Psoas muscle (tissue), 8 donors: ENCODE measurements at regions of chr6 and their contacts with region 1.

Region 1: GRCh38 chr6:72622094-72622940 is 453 bp downstream of the KCNQ5 start:
- DNase-seq: peak; percentile 52 to 84
- ATAC-seq: peak; percentile 67 to 73 (median 72)
- H3K4me3 ChIP-seq: peak overlapping the region; percentile 86
- H3K27ac ChIP-seq: peak overlapping the region; percentile 88
- H3K4me1 ChIP-seq: peaks cover 21% of the 10 kb centered on the region
- H3K27me3 ChIP-seq: no peaks in the 10 kb centered on the region
- CTCF ChIP-seq: peak; percentile 41

Region 2: GRCh38 chr6:72748759-72749158 is 126.4 kb after region 1 on chr6:
- intact Hi-C with region 1: loop called in 1 of 2 experiments (anchors 10 kb)
- DNase-seq: no peak
- ATAC-seq: no peak
- H3K4me3 ChIP-seq: no peak overlapping the region
- H3K27ac ChIP-seq: peak overlapping the region; percentile 3
- H3K4me1 ChIP-seq: peaks cover 25% of the 10 kb centered on the region
- H3K27me3 ChIP-seq: no peaks in the 10 kb centered on the region
- CTCF ChIP-seq: no peak

Region 3: DNA sequence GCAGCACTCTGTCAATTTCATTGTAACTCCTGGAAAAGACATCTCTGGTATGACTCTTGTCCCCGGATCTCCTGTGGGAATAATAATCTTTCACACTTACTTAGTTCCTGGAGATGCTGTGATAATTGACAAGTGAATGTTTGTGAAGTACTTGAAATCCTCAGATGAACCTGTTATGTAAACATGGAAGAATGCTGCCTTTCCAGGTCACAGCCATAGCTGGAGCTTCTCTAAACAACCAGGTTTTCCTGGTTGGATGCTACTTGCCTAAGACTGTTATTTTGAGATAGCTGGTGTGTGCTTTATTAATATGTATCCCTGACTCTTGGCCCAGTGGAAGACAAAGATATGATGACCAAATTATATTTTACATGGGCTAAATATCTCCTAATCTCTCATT is 228.2 kb after region 1 on chr6:
- intact Hi-C with region 1: no loop called
- DNase-seq: no peak
- ATAC-seq: peak in 3 of 4 donors; percentile 37 to 57 (median 38)
- H3K4me3 ChIP-seq: no peak overlapping the region
- H3K27ac ChIP-seq: peak overlapping the region; percentile 44
- H3K4me1 ChIP-seq: peaks cover 11% of the 10 kb centered on the region
- H3K27me3 ChIP-seq: no peaks in the 10 kb centered on the region
- CTCF ChIP-seq: no peak

Region 4: DNA sequence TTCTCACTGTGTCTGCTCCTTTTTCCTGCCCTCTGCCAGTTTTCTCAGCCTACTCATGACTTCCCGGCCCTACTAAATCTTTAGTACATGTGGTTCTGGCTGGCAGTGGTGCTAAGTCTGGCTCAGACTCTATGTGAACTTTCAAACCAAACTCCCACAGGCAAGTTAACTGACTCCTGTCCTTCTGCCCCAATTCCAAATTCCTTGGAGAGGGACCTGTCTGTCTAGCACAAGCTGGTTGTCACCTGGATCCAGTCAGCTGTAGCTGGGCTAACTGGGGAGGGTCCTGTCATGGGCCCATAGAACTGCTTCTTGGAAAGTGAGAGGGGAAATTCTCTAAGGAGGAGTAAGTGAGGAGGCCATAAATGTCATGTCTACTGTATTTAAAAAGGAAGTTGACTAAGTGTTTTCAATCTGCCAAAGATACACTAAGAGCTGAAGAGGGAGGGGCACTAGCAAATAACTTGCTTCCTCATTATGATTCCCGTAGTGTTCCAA is 239.7 kb after region 1 on chr6:
- intact Hi-C with region 1: loop called in 1 of 2 experiments (anchors 2 kb)
- DNase-seq: peak; percentile 44 to 66
- ATAC-seq: peak; percentile 76 to 87 (median 80)
- H3K4me3 ChIP-seq: no peak overlapping the region
- H3K27ac ChIP-seq: peak overlapping the region; percentile 86
- H3K4me1 ChIP-seq: peaks cover 58% of the 10 kb centered on the region
- H3K27me3 ChIP-seq: no peaks in the 10 kb centered on the region
- CTCF ChIP-seq: no peak

Region 5: DNA sequence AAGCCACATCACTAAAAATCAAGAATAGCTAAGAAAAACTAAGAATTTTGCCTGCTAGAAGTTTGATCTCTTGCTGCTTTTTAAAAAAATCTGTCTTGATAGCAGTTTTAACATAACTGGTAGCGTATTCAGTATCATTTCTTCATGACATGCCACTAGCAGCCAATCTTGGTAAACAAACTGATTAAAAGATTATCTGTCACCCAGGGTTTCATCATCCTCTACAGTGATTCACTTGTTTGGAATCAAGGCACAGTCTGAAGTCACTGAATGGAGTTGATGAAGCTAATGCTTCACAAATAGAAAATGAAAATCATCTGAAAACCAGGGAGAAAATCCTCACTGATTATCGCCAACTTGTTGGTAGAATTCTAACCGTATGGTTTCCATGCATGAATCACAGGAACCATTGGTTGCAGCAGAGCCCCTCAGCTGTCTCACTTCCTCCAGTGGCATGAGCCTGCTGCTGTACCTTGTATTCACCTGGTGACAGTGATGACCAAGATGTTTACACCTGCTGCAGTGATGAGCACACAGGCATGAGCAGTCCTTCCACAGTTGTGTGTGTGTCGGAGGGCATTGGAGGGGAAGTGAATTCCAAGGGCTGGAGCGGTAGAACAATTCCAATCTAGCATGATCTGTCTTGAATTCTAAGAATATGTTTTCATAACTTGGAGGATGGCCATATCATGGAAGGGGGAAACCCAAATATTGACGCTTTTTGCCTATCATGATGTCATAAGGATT is 328.0 kb after region 1 on chr6:
- intact Hi-C with region 1: loop called in 1 of 2 experiments (anchors 10 kb)
- DNase-seq: peak in 1 of 2 donors; percentile 50
- ATAC-seq: peak; percentile 83 to 89 (median 86)
- H3K4me3 ChIP-seq: peak overlapping the region; percentile 19
- H3K27ac ChIP-seq: peak overlapping the region; percentile 92
- H3K4me1 ChIP-seq: peaks cover 77% of the 10 kb centered on the region
- H3K27me3 ChIP-seq: no peaks in the 10 kb centered on the region
- CTCF ChIP-seq: no peak

Region 6: GRCh38 chr6:73180763-73181619 is 558.7 kb after region 1 on chr6:
- intact Hi-C with region 1: loop called in 1 of 2 experiments (anchors 5 kb)
- DNase-seq: no peak
- ATAC-seq: peak; percentile 75 to 95 (median 88)
- H3K4me3 ChIP-seq: peak overlapping the region; percentile 42
- H3K27ac ChIP-seq: peak overlapping the region; percentile 30
- H3K4me1 ChIP-seq: peaks cover 10% of the 10 kb centered on the region
- H3K27me3 ChIP-seq: no peaks in the 10 kb centered on the region
- CTCF ChIP-seq: peak; percentile 77